HEK293 (cell line): ENCODE measurements at regions of chr4 and their contacts with region 1.

Region 1: GRCh38 chr4:118888666-118889311 is at the start of gene SYNPO2:
- H3K4me3 ChIP-seq: peak within 1 kb of the TSS; percentile 42
- H3K27ac ChIP-seq: no peak within 1 kb of the TSS
- H3K4me1 ChIP-seq: no peaks in the 10 kb centered on the region
- CTCF ChIP-seq: no peak; the same call in 1 of the 2 replicates

Region 2: GRCh38 chr4:118833192-118833820 is 55.5 kb before region 1 on chr4:
- CTCF ChIA-PET with region 1: no interaction called
- POLR2A ChIA-PET with region 1: no interaction called
- H3K4me3 ChIP-seq: no peak overlapping the region
- H3K27ac ChIP-seq: no peak overlapping the region
- H3K4me1 ChIP-seq: peaks cover 3% of the 10 kb centered on the region; the same call in 1 of the 2 replicates
- CTCF ChIP-seq: no peak

Region 3: DNA sequence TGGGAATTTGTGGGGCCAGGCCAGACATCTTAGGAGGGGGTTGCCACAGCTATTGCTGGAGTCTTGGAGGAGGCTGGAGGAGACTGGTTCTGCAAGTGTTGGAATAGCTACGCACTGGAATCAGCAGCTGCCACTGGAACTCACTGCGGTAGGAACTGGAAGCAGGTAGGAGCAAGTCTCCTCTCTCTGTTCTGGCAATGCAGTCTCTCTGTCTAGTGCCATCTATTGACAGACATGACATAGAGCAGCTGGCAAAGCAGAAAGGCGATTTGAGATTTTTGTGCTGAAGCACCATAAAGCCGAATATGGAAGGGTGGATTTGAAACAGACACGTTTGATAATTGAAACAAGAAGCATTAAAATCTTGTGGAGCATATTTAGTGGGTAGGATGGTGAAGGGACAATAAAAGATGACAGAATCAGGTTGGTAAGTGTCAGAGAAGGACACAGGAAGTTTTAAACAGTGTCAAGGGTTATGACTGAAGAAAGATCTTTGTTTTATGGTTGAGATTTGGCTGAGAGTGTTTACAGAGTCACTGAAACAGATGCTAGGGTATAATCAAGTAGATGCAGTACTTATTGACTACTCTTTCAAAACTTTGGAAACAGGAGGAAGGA is 23.6 kb before region 1 on chr4:
- CTCF ChIA-PET with region 1: interaction called, 10 read pairs
- POLR2A ChIA-PET with region 1: no interaction called
- H3K4me3 ChIP-seq: no peak overlapping the region
- H3K27ac ChIP-seq: no peak overlapping the region
- H3K4me1 ChIP-seq: no peaks in the 10 kb centered on the region
- CTCF ChIP-seq: peak; percentile 64